Dorsolateral prefrontal cortex (tissue), 120 donors: ENCODE measurements at regions of chr1 and their contacts with region 1.

Region 1: GRCh38 chr1:32400876-32401631 is 6.8 kb upstream of the BSDC1 start:
- DNase-seq: peak; percentile 74 to 93 (median 86)
- H3K4me3 ChIP-seq: peak overlapping the region in 21 of 59 donors; percentile 0 to 44 (median 27)
- H3K27ac ChIP-seq: peak overlapping the region in 39 of 59 donors; percentile 2 to 83 (median 43)
- H3K27me3 ChIP-seq: no peaks in the 10 kb centered on the region
- CTCF ChIP-seq: peak; percentile 54 to 96 (median 88)

Region 2: DNA sequence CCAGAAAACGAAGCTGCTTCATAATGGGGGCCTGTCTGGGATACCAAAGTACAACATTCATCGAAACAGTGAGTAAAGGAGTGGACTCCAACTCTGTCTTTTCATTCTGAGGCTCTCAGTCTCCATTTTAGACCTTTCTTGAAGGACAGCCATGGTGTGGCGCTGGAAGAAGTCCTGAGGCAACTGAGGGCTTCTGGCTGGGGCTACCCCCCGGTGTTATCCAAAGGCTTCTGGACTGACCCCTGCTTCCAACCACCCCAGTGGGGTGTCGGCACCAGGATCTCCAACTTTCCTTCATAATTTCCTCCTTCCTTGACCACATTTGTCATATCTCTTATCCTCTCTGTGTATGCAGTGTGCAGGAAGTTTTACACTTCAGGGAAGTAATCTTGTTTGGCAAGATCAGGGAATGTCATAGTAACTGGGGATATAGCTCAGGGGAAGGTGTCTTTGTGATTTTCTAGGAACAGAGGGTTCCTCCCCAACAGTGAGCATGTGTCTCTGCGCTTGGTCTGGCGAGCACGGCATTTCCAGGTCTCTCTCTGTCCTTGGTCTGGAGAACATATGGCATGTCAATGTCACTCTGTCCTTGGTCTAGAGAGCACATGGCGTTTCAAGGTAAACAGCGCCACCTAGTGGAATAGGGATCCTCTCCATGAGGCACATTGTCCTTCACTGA is 12.6 kb after region 1 on chr1:
- intact Hi-C with region 1: loop called in 1 of 2 experiments (anchors 1 kb)
- DNase-seq: peak in 4 of 10 donors; percentile 22 to 85 (median 53)
- H3K4me3 ChIP-seq: no peak overlapping the region
- H3K27ac ChIP-seq: no peak overlapping the region
- H3K27me3 ChIP-seq: no peaks in the 10 kb centered on the region
- CTCF ChIP-seq: peak in 55 of 56 donors; percentile 44 to 84 (median 74)

Region 3: DNA sequence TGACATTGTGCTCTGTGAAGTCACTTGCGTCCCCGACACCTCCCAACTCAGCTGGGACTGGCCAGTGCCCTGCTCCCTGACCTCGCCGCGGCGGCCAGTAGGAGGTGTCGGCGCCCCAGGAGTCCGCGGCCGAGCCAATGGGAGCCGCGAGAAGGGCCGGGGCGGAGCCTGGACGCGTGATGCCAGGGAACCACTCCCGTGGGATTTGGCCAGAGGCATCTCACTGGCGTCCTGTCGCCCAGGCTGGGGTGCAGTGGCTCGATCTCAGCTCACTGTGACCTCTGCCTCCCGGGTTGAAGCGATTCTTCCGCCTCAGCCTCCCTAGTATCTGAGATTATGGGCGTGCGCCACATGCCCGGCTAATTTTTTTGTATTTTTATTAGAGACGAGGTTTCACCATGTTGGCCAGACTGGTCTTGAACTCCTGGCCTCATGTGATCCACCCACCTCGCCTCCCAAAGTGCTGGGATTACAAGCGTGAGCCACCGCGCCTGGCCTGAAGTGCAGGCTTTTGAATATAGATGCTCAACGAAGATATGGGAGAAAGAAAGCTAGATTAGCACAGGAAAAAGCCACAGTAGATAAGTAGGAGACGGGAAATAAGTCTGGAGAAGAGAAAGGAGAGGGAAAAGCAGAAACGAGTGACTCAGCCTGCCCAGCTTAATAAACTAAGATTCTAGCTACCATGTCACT is 211.3 kb after region 1 on chr1:
- intact Hi-C with region 1: loop called in 1 of 2 experiments (anchors 10 kb)
- DNase-seq: peak; percentile 80 to 95 (median 92)
- H3K4me3 ChIP-seq: peak overlapping the region; percentile 44 to 88 (median 69)
- H3K27ac ChIP-seq: peak overlapping the region in 47 of 59 donors; percentile 0 to 83 (median 64)
- H3K27me3 ChIP-seq: no peaks in the 10 kb centered on the region
- CTCF ChIP-seq: peak in 55 of 56 donors; percentile 6 to 72 (median 55)

Region 4: GRCh38 chr1:32650752-32651460 is 249.9 kb after region 1 on chr1 and contains the start of gene RBBP4:
- intact Hi-C with region 1: loop called in 1 of 2 experiments (anchors 5 kb)
- DNase-seq: peak; percentile 94 to 98 (median 97)
- H3K4me3 ChIP-seq: peak within 1 kb of the TSS; percentile 69 to 99 (median 90)
- H3K27ac ChIP-seq: peak within 1 kb of the TSS; percentile 98 to 100 (median 100)
- H3K27me3 ChIP-seq: no peaks in the 10 kb centered on the region
- CTCF ChIP-seq: peak in 31 of 56 donors; percentile 7 to 47 (median 32)
- total RNA-seq, gene RBBP4: 115 to 177 (median 148) TPM

Region 5: GRCh38 chr1:32773018-32773763 is 372.1 kb after region 1 on chr1:
- intact Hi-C with region 1: loop called in 1 of 2 experiments (anchors 5 kb)
- DNase-seq: peak; percentile 70 to 86 (median 79)
- H3K4me3 ChIP-seq: no peak overlapping the region
- H3K27ac ChIP-seq: peak overlapping the region in 8 of 59 donors; percentile 4 to 36 (median 22)
- H3K27me3 ChIP-seq: no peaks in the 10 kb centered on the region
- CTCF ChIP-seq: peak; percentile 77 to 94 (median 90)

Region 6: GRCh38 chr1:32870615-32871363 is 469.7 kb after region 1 on chr1 and contains the start of gene FNDC5:
- intact Hi-C with region 1: loop called in 1 of 2 experiments (anchors 5 kb)
- DNase-seq: peak in 1 of 10 donors; percentile 41
- H3K4me3 ChIP-seq: peak within 1 kb of the TSS; percentile 25 to 71 (median 54)
- H3K27ac ChIP-seq: peak within 1 kb of the TSS in 50 of 59 donors; percentile 5 to 83 (median 64)
- H3K27me3 ChIP-seq: no peaks in the 10 kb centered on the region
- CTCF ChIP-seq: peak in 1 of 56 donors; percentile 6
- total RNA-seq, gene FNDC5: 5.1 to 60.1 (median 32.9) TPM